AG04449 (cell line): ENCODE measurements at regions of chr17 and their contacts with region 1.

Region 1: DNA sequence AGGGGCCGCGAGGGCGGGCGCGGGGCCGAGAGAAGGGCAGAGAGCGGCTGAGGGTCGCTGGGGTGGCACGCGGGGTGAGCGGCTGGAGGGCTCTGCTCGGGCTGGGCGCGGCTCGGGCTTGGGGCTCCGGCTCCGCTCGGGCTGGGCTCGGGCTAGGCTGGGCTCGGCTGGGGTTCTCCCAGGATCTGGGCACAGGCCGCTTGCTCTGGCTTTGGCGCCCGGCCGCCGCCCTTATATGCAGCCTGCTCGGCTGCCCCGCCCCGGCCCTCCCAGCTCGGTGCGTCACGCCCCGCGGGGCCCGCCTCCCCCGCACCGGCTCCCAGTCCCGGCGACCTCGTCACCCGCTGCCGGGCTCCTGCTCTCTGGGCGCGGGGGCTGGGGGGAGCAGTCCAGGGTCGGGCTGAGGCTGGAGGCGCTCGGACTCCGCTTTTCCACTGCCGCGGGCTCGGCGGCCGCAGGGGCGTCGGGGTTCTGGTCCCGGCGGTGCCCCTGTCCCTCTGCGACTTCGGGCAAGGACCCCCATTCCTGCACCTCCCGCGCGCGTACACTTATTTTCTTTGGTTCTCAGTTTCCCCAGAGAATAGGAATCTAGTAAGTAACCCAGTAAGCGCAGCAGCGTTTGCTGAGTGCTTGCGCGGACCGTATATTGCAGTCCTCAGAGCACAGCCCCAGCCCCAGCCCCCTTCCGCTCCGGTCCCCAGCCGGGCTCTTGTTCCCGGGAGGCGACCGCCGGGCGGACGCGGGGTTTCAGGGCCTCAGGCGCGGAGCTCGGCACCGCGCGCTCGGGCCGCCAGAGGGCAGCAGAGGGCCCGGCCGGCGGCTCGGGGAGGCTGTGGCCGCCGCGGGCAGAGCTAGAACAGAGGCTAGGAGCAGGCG is at the start of gene RASD1:
- DNase-seq: no peak
- H3K4me3 ChIP-seq: peak within 1 kb of the TSS; percentile 59
- CTCF ChIP-seq: peak; percentile 79

Region 2: DNA sequence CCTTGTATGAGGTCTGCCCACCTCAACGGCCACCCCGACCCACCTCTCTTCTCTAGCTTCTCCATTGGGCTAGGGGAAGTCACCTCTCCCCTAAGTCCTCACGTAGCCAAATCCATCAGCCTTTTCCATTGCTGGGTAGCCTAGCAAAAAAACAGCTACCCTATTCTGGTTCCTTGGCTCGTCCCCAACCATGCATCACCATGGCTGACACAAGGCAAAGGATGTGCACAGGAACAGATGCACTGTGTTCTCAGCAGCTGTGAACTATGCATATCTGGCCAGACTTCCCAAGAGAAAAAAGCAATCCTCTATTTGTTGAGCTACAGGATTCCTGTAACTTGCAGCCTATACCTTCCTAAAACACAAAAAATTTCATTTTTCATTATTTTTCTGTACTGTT is 237.4 kb before region 1 on chr17:
- CTCF ChIA-PET with region 1: no interaction called
- POLR2A ChIA-PET with region 1: no interaction called
- DNase-seq: no peak
- H3K4me3 ChIP-seq: no peak overlapping the region
- CTCF ChIP-seq: no peak

Region 3: DNA sequence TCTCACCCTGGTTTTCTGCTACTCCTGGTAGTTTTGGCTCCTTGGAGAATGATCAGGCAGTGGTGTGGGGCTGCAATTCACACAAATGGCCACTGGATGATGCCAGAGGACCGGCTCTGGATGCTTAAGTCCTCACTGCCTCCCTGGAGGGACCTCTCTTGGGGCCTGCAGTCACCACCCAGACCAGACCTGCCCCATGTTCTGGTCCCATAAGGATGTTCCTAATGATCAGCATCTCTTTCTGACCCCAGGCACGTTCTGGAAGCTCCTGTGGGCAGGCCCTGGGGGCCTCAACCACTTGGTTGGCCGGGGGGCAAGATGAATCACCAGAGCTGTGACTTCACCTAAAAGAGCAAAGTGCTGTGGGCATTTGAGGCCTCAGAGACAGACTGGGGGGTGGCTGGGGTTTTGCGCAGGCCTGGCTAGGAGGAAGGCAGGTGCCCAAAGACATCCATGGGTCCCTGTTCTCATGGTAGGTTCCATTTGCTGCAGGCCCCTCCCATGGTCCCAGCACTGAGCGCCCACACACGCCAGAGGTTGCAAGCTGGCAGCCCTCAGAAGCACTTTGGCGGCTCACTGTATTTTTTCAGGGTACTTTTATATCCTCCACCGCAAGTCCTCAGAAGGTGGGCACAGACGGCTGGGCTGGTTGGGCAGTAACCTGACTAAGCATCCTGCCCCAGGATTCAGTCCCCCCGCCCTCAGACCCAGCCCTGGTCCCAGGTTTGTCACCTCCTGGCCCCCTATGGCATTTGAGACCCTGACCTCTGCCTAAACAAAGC is 140.1 kb before region 1 on chr17:
- CTCF ChIA-PET with region 1: interaction called, 111 read pairs
- POLR2A ChIA-PET with region 1: no interaction called
- DNase-seq: peak; percentile 37
- H3K4me3 ChIP-seq: no peak overlapping the region
- CTCF ChIP-seq: peak; percentile 98

Region 4: GRCh38 chr17:17480593-17481148 is 15.8 kb before region 1 on chr17:
- CTCF ChIA-PET with region 1: interaction called, 13 read pairs
- POLR2A ChIA-PET with region 1: interaction called, 3 read pairs
- DNase-seq: no peak
- H3K4me3 ChIP-seq: no peak overlapping the region
- CTCF ChIP-seq: no peak

Region 5: GRCh38 chr17:17528696-17529652 is 32.5 kb after region 1 on chr17:
- CTCF ChIA-PET with region 1: interaction called, 12 read pairs
- POLR2A ChIA-PET with region 1: interaction called, 5 read pairs
- DNase-seq: no peak
- H3K4me3 ChIP-seq: no peak overlapping the region
- CTCF ChIP-seq: no peak

Region 6: DNA sequence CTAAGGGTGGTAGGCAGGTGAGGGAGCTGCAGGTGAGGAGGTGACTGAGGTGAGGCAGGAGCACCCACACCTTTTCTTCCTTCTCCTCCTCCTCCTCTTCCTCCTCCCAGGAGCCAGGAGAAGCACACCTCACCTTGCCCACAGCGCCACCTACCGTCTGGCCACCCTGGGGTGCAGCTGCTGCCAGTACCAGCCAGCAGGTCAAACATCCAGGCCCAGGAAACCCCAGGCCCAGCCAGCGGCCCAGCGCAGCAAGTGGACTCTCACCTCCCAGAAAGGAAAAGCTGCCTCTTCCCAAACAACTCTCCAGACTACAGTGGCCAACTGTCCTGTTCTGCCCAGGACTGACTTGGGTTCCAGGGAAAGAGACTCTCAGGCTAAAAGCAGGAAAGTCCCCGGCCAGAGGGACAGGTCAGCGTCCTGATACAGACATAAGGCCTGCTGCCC is 72.3 kb after region 1 on chr17:
- CTCF ChIA-PET with region 1: interaction called, 172 read pairs
- POLR2A ChIA-PET with region 1: interaction called, 11 read pairs
- DNase-seq: no peak
- H3K4me3 ChIP-seq: no peak overlapping the region
- CTCF ChIP-seq: peak; percentile 88

Region 7: GRCh38 chr17:17591355-17592298 is 95.2 kb after region 1 on chr17 and contains the start of gene PEMT:
- CTCF ChIA-PET with region 1: interaction called, 26 read pairs
- POLR2A ChIA-PET with region 1: interaction called, 5 read pairs
- DNase-seq: peak; percentile 94
- H3K4me3 ChIP-seq: peak within 1 kb of the TSS; percentile 85
- CTCF ChIP-seq: no peak

Region 8: DNA sequence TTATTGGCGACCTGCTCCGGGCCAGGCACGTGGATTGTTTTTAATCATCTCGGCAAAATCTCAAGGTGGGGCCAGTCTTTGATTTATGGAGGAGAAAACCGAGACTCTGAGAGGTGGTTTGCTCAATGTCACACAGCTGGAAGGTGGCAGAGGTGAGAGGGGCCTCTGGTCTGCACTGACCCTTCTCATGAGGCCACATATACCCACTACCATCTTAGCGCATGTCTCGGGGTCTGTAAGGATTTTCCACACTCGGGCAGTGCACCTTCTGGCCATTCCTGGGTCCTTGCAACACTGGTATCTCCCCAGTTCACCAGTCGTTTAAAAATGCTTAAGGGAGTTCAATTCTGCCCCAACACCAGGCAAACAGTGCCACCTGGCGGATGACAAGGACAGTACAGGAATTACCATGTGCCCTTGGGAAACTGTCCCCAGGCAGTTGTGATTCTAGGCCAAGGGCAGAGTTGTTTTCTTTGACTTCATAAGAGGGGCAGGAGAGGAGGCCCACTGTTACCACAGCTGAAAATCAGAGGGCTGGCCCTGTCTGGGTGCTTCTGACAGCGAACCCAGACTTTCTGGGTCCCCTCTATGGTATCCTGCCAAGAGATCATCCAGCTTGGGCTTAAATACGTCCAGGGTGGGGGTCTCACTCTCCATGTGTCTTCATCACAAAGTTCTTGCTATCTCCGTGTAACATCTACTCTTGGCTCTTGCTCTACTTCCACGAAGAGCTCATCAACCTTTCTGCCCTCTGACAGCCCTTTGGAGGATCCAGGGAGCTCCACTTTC is 145.4 kb after region 1 on chr17:
- CTCF ChIA-PET with region 1: interaction called, 67 read pairs
- POLR2A ChIA-PET with region 1: interaction called, 12 read pairs
- DNase-seq: peak; percentile 19
- H3K4me3 ChIP-seq: no peak overlapping the region
- CTCF ChIP-seq: peak; percentile 85

Region 9: GRCh38 chr17:17659340-17659739 is 162.9 kb after region 1 on chr17:
- CTCF ChIA-PET with region 1: no interaction called
- POLR2A ChIA-PET with region 1: no interaction called
- DNase-seq: no peak
- H3K4me3 ChIP-seq: no peak overlapping the region
- CTCF ChIP-seq: no peak